Natural killer cell (primary cell): ENCODE measurements at regions of chrX and their contacts with region 1.

Region 1: GRCh38 chrX:100685284-100685996 is 41.4 kb downstream of the SRPX2 start:
- DNase-seq: peak; percentile 15 to 73
- ATAC-seq: peak; percentile 50 to 76 (median 52)
- H3K4me3 ChIP-seq: no peak overlapping the region
- H3K4me3 Mint-ChIP-seq: no peak overlapping the region
- H3K27ac ChIP-seq: no peak overlapping the region
- H3K27ac Mint-ChIP-seq: no peak overlapping the region
- H3K4me1 ChIP-seq: peaks cover 3% of the 10 kb centered on the region
- H3K4me1 Mint-ChIP-seq: peaks cover 8 to 12% of the 10 kb centered on the region in 2 donors
- H3K27me3 ChIP-seq: no peaks in the 10 kb centered on the region
- H3K27me3 Mint-ChIP-seq: no peaks in the 10 kb centered on the region
- CTCF ChIP-seq: peak; percentile 41

Region 2: GRCh38 chrX:100484971-100485370 is 200.5 kb before region 1 on chrX:
- intact Hi-C with region 1: no loop called
- DNase-seq: no peak
- ATAC-seq: no peak
- H3K4me3 ChIP-seq: no peak overlapping the region
- H3K4me3 Mint-ChIP-seq: no peak overlapping the region
- H3K27ac ChIP-seq: no peak overlapping the region
- H3K27ac Mint-ChIP-seq: no peak overlapping the region
- H3K4me1 ChIP-seq: no peaks in the 10 kb centered on the region
- H3K4me1 Mint-ChIP-seq: no peaks in the 10 kb centered on the region
- H3K27me3 ChIP-seq: no peaks in the 10 kb centered on the region
- H3K27me3 Mint-ChIP-seq: no peaks in the 10 kb centered on the region
- CTCF ChIP-seq: no peak

Region 3: GRCh38 chrX:100720301-100720700 is 34.9 kb after region 1 on chrX:
- intact Hi-C with region 1: no loop called
- DNase-seq: no peak
- ATAC-seq: no peak
- H3K4me3 ChIP-seq: no peak overlapping the region
- H3K4me3 Mint-ChIP-seq: no peak overlapping the region
- H3K27ac ChIP-seq: no peak overlapping the region
- H3K27ac Mint-ChIP-seq: no peak overlapping the region
- H3K4me1 ChIP-seq: no peaks in the 10 kb centered on the region
- H3K4me1 Mint-ChIP-seq: no peaks in the 10 kb centered on the region
- H3K27me3 ChIP-seq: no peaks in the 10 kb centered on the region
- H3K27me3 Mint-ChIP-seq: peaks cover 0 to 4% of the 10 kb centered on the region in 2 donors
- CTCF ChIP-seq: no peak

Region 4: GRCh38 chrX:100768679-100769338 is 83.4 kb after region 1 on chrX:
- intact Hi-C with region 1: loop called (anchors 1 kb)
- DNase-seq: peak; percentile 66 to 82
- ATAC-seq: peak; percentile 99 to 100 (median 100)
- H3K4me3 ChIP-seq: no peak overlapping the region
- H3K4me3 Mint-ChIP-seq: no peak overlapping the region
- H3K27ac ChIP-seq: no peak overlapping the region
- H3K27ac Mint-ChIP-seq: no peak overlapping the region
- H3K4me1 ChIP-seq: no peaks in the 10 kb centered on the region
- H3K4me1 Mint-ChIP-seq: no peaks in the 10 kb centered on the region
- H3K27me3 ChIP-seq: no peaks in the 10 kb centered on the region
- H3K27me3 Mint-ChIP-seq: peaks cover 7 to 13% of the 10 kb centered on the region in 2 donors
- CTCF ChIP-seq: peak; percentile 95

Region 5: GRCh38 chrX:101287402-101287801 is 602.0 kb after region 1 on chrX:
- intact Hi-C with region 1: loop called (anchors 10 kb)
- DNase-seq: peak in 1 of 2 donors; percentile 52
- ATAC-seq: peak in 1 of 3 donors; percentile 54
- H3K4me3 ChIP-seq: no peak overlapping the region
- H3K4me3 Mint-ChIP-seq: no peak overlapping the region
- H3K27ac ChIP-seq: no peak overlapping the region
- H3K27ac Mint-ChIP-seq: no peak overlapping the region
- H3K4me1 ChIP-seq: no peaks in the 10 kb centered on the region
- H3K4me1 Mint-ChIP-seq: no peaks in the 10 kb centered on the region
- H3K27me3 ChIP-seq: no peaks in the 10 kb centered on the region
- H3K27me3 Mint-ChIP-seq: no peaks in the 10 kb centered on the region
- CTCF ChIP-seq: peak; percentile 46